ENCODE measurements at regions of chr18 and their contacts with region 1.

Region 1: DNA sequence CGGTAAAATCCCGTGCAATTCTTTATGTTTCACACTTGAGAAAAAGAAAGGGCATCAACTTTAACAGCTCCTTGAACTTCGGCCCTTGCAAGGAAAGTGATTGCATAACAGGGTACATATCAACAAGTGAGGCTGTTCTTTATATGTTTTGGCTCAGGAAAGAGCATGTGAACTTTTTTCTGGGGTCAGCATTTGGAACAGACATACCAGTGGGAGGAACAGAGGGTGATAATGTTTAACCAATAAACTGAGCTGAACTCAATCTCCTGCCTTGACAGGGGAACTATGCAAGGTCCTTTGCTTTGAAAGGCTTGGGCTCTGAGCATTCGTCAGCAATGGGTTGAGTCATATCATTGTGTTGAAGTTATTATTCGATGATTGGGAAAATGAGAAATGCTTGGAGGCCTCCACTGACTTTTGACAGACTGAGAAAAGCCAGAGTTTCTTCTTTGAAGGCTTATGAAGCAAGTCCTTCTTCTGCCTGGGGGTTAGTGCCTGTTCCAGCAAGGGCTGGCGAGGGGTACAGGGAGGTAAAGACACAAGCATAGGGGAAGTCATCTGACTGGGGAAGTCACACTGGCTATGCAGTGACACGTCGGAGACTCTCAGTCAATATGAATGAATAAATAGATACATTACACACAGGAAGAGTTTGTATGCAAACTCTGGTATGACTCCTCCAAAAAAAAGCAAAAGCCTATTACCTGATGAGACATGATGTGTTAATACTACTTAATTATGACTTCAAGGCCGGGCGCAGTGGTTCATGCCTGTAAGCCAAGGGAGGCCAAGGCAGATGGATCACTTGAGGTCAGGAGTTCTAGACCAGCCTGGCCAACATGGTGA is 57.2 kb downstream of the CYB5A start:
- DNase-seq: peak; percentile 98
- ATAC-seq: peak; percentile 98
- H3K4me3 ChIP-seq: peak overlapping the region in 1 of 3 experiments; percentile 33; a peak in 1 of 6 replicates
- H3K27ac ChIP-seq: peak overlapping the region; percentile 98
- H3K4me1 ChIP-seq: peaks cover 66% of the 10 kb centered on the region
- H3K27me3 ChIP-seq: no peaks in the 10 kb centered on the region
- CTCF ChIP-seq: no peak
- EP300 ChIP-seq: peak; percentile 34 to 96; a peak in 3 of 4 replicates
- POLR2A ChIP-seq: 0 out of 4 replicates have a peak, but pooled peaks have one; percentile 15 to 32
- RAD21 ChIP-seq: no peak

Region 2: GRCh38 chr18:73908323-73908722 is 326.2 kb before region 1 on chr18:
- CTCF ChIA-PET with region 1: no interaction called
- POLR2A ChIA-PET with region 1: no interaction called
- in situ Hi-C with region 1: no loop called
- intact Hi-C with region 1: no loop called
- DNase-seq: no peak
- ATAC-seq: peak; percentile 72
- H3K4me3 ChIP-seq: no peak overlapping the region
- H3K27ac ChIP-seq: no peak overlapping the region
- H3K4me1 ChIP-seq: no peaks in the 10 kb centered on the region
- H3K27me3 ChIP-seq: no peaks in the 10 kb centered on the region; a peak in 1 of 5 replicates
- CTCF ChIP-seq: no peak
- EP300 ChIP-seq: no peak
- POLR2A ChIP-seq: no peak
- RAD21 ChIP-seq: no peak

Region 3: DNA sequence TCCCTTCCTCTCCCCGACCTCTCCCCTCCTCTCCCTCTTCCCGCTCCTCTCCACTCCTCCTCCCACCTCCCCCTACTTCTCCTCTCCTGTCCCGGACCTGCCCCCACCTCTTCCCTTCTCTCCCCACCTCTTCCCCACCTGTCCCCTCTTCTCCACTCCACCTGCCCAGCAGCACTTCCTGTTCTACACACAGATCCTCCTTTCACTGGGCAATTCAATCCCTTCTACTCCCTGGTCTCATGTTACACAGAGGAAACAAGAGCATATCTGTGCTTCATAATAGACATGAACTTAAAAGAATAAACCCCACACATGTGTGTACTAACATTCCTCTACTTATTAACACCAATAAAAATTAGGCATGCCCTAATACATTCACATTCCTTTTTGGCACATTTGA is 51.4 kb before region 1 on chr18:
- CTCF ChIA-PET with region 1: no interaction called
- POLR2A ChIA-PET with region 1: no interaction called
- in situ Hi-C with region 1: no loop called
- intact Hi-C with region 1: no loop called
- DNase-seq: no peak
- ATAC-seq: no peak
- H3K4me3 ChIP-seq: no peak overlapping the region
- H3K27ac ChIP-seq: no peak overlapping the region
- H3K4me1 ChIP-seq: no peaks in the 10 kb centered on the region
- H3K27me3 ChIP-seq: peaks cover 2 to 51% of the 10 kb centered on the region in 2 experiments; a peak in 4 of 5 replicates
- CTCF ChIP-seq: no peak
- EP300 ChIP-seq: no peak
- POLR2A ChIP-seq: no peak
- RAD21 ChIP-seq: no peak

Region 4: GRCh38 chr18:74249181-74249968 is 14.8 kb after region 1 on chr18:
- CTCF ChIA-PET with region 1: interaction called, 3 read pairs
- POLR2A ChIA-PET with region 1: interaction called, 7 read pairs
- in situ Hi-C with region 1: no loop called
- intact Hi-C with region 1: loop called (anchors 2 kb)
- DNase-seq: peak; percentile 84
- ATAC-seq: peak; percentile 89
- H3K4me3 ChIP-seq: peak overlapping the region in 1 of 3 experiments; percentile 6; a peak in 1 of 6 replicates
- H3K27ac ChIP-seq: peak overlapping the region; percentile 67
- H3K4me1 ChIP-seq: peaks cover 55% of the 10 kb centered on the region
- H3K27me3 ChIP-seq: no peaks in the 10 kb centered on the region
- CTCF ChIP-seq: no peak
- EP300 ChIP-seq: peak in 1 of 2 experiments; percentile 69; a peak in 2 of 4 replicates
- POLR2A ChIP-seq: 0 out of 4 replicates have a peak, but pooled peaks of 1 of the 2 experiments have one; percentile 5
- RAD21 ChIP-seq: no peak

Region 5: DNA sequence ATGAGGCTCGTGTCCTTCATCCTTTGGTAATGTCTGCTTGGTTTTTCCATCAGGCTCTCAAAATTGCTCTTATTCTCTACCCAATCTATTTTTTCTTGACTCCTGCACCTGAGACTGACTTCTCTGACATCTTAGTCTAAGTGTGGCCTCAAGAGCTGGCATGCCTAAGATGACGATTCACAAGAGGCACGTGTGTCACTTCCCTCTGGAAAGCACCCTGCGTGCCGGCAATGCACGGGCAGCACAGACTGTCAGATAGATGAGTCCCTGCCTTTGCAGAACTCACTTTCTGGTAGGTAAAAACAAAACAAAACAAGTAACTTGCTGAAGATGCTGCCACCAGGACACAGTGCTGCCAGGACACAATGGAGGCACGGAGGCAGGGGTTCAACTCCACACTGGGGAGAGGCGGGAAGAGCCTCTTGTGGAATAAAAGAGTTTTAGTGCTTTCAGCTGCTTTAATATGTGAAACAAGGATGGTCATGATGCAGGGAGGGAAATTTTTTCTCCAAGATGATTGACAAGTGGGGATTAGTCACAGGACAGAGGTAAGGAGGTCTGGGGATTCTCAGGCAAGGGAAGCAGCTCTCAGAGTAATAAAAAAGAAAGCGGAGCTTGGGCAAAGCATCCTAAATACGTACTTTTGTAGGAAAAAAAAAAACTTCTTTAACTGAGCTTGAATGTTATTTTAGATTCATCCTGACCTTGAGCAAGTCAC is 29.9 kb after region 1 on chr18:
- CTCF ChIA-PET with region 1: no interaction called
- POLR2A ChIA-PET with region 1: no interaction called
- in situ Hi-C with region 1: no loop called
- intact Hi-C with region 1: loop called (anchors 5 kb)
- DNase-seq: no peak
- ATAC-seq: no peak
- H3K4me3 ChIP-seq: no peak overlapping the region
- H3K27ac ChIP-seq: peak overlapping the region; percentile 77
- H3K4me1 ChIP-seq: peaks cover 60% of the 10 kb centered on the region
- H3K27me3 ChIP-seq: no peaks in the 10 kb centered on the region
- CTCF ChIP-seq: no peak
- EP300 ChIP-seq: no peak
- POLR2A ChIP-seq: no peak
- RAD21 ChIP-seq: no peak

Region 6: GRCh38 chr18:74281639-74282358 is 47.2 kb after region 1 on chr18:
- CTCF ChIA-PET with region 1: no interaction called
- POLR2A ChIA-PET with region 1: interaction called, 3 read pairs
- in situ Hi-C with region 1: loop called (anchors 5 kb)
- intact Hi-C with region 1: no loop called
- DNase-seq: peak; percentile 81
- ATAC-seq: peak; percentile 86
- H3K4me3 ChIP-seq: peak overlapping the region in 2 of 3 experiments; percentile 24 to 59; a peak in 3 of 6 replicates
- H3K27ac ChIP-seq: peak overlapping the region; percentile 84
- H3K4me1 ChIP-seq: peaks cover 94% of the 10 kb centered on the region
- H3K27me3 ChIP-seq: no peaks in the 10 kb centered on the region
- CTCF ChIP-seq: no peak
- EP300 ChIP-seq: peak in 1 of 2 experiments; percentile 48; a peak in 1 of 4 replicates
- POLR2A ChIP-seq: peak in 1 of 2 experiments; percentile 23; a peak in 1 of 4 replicates
- RAD21 ChIP-seq: no peak